CD4-positive, alpha-beta T cell (primary cell): ENCODE measurements at regions of chr9 and their contacts with region 1.

Region 1: DNA sequence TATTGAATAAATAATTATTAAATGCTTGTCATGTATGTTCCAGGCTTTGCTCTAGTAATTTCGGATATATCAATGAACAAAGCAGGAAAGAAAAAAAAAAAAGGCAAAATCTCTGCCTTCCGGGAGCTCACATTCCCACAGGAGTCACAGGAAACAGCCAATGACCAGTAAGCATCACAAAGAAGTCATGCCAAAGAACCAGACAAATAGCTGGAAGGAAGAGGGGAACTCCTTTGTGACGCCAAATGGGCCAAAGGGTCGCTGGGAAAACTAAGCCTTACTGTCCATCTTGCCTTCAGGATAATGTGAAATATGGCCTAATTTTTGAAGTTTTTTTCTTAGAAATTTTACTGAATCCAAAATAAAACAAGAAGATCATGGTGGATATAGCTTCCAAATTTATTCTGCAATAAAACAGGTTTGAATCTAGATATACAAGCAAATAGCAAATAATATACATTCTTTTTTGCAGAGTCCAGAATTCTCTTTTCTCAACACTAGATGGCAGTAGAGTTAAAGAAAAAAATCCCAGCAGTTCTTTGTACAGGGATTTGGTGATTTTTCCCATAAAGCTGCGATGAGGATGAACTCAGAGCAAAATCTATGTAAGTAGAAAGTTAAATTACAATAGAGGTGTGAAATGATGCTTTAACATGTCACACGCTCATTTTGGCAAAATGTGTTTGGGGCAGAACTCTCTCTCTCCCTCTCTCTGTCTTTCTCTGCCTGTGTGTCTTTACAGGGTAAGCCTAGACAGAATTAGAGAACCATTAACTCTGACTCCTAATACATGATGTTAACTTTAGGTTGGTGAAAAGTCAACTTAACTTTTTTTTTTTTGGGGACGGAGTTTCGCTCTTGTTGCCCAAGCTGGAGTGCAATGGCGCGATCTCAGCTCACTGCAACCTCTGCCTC is 60.0 kb upstream of the TUT7 start:
- DNase-seq: peak in 3 of 14 experiments; percentile 27 to 35 (median 31)
- ATAC-seq: no peak
- H3K4me3 ChIP-seq: no peak overlapping the region
- H3K4me3 Mint-ChIP-seq: no peak overlapping the region
- H3K27ac ChIP-seq: no peak overlapping the region
- H3K27ac Mint-ChIP-seq: no peak overlapping the region
- H3K4me1 ChIP-seq: no peaks in the 10 kb centered on the region
- H3K4me1 Mint-ChIP-seq: no peaks in the 10 kb centered on the region
- H3K27me3 ChIP-seq: no peaks in the 10 kb centered on the region
- H3K27me3 Mint-ChIP-seq: peaks cover 21% of the 10 kb centered on the region
- CTCF ChIP-seq: peak; percentile 90

Region 2: GRCh38 chr9:86481466-86481865 is 67.2 kb after region 1 on chr9:
- CTCF ChIA-PET with region 1: no interaction called
- POLR2A ChIA-PET with region 1: no interaction called
- intact Hi-C with region 1: no loop called
- DNase-seq: no peak
- ATAC-seq: no peak
- H3K4me3 ChIP-seq: no peak overlapping the region
- H3K4me3 Mint-ChIP-seq: no peak overlapping the region
- H3K27ac ChIP-seq: no peak overlapping the region
- H3K27ac Mint-ChIP-seq: no peak overlapping the region
- H3K4me1 ChIP-seq: no peaks in the 10 kb centered on the region
- H3K4me1 Mint-ChIP-seq: no peaks in the 10 kb centered on the region
- H3K27me3 ChIP-seq: no peaks in the 10 kb centered on the region
- H3K27me3 Mint-ChIP-seq: peaks cover 23% of the 10 kb centered on the region
- CTCF ChIP-seq: no peak

Region 3: GRCh38 chr9:86940774-86941173 is 526.6 kb after region 1 on chr9:
- CTCF ChIA-PET with region 1: no interaction called
- POLR2A ChIA-PET with region 1: no interaction called
- intact Hi-C with region 1: no loop called
- DNase-seq: no peak
- ATAC-seq: no peak
- H3K4me3 ChIP-seq: no peak overlapping the region
- H3K4me3 Mint-ChIP-seq: no peak overlapping the region
- H3K27ac ChIP-seq: no peak overlapping the region
- H3K27ac Mint-ChIP-seq: no peak overlapping the region
- H3K4me1 ChIP-seq: peaks cover 9% of the 10 kb centered on the region
- H3K4me1 Mint-ChIP-seq: peaks cover 7% of the 10 kb centered on the region
- H3K27me3 ChIP-seq: peaks cover 38 to 67% of the 10 kb centered on the region in 2 experiments
- H3K27me3 Mint-ChIP-seq: peaks cover 78% of the 10 kb centered on the region
- CTCF ChIP-seq: no peak

Region 4: DNA sequence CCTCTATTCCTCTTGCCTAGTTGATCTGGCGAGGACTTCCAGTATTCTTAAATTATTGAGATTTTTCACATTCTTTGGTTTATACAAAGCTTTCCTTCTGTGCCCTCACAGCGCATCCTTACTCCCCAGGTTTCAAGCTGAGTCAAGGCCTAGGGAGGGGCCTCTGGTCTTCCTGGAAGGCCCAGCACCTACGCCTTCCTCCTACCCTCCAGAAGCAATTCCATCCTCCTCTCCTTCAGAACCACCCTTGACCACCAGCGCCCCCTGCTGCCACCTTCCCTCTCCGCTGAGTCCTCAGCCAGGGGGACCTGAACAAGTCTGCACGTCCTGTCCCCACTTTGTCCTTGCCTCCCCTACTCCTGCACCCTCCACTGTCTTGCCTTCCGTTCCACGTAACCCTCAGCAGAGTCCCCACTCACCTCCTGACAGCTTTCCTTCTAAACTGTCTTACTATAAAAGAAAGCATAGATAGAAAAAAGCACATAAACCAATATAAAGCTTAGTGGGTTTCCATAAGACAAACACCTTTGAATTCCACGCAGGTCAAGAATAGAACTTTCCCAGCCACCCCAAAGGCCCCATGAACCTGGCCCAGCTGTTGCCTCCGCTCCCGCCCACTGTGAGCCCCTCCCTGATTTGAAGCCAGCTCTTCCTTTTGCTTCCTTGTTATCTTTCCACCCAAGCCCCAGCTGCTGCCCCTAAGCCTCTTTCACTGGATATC is 1248.7 kb after region 1 on chr9:
- CTCF ChIA-PET with region 1: no interaction called
- POLR2A ChIA-PET with region 1: no interaction called
- intact Hi-C with region 1: loop called in 1 of 2 experiments (anchors 10 kb)
- DNase-seq: peak in 10 of 14 experiments; percentile 7 to 61 (median 28)
- ATAC-seq: no peak
- H3K4me3 ChIP-seq: no peak overlapping the region
- H3K4me3 Mint-ChIP-seq: no peak overlapping the region
- H3K27ac ChIP-seq: no peak overlapping the region
- H3K27ac Mint-ChIP-seq: no peak overlapping the region
- H3K4me1 ChIP-seq: no peaks in the 10 kb centered on the region
- H3K4me1 Mint-ChIP-seq: no peaks in the 10 kb centered on the region
- H3K27me3 ChIP-seq: no peaks in the 10 kb centered on the region
- H3K27me3 Mint-ChIP-seq: no peaks in the 10 kb centered on the region
- CTCF ChIP-seq: peak; percentile 48